ENCODE measurements at regions of chr1 and their contacts with region 1.

Region 1: DNA sequence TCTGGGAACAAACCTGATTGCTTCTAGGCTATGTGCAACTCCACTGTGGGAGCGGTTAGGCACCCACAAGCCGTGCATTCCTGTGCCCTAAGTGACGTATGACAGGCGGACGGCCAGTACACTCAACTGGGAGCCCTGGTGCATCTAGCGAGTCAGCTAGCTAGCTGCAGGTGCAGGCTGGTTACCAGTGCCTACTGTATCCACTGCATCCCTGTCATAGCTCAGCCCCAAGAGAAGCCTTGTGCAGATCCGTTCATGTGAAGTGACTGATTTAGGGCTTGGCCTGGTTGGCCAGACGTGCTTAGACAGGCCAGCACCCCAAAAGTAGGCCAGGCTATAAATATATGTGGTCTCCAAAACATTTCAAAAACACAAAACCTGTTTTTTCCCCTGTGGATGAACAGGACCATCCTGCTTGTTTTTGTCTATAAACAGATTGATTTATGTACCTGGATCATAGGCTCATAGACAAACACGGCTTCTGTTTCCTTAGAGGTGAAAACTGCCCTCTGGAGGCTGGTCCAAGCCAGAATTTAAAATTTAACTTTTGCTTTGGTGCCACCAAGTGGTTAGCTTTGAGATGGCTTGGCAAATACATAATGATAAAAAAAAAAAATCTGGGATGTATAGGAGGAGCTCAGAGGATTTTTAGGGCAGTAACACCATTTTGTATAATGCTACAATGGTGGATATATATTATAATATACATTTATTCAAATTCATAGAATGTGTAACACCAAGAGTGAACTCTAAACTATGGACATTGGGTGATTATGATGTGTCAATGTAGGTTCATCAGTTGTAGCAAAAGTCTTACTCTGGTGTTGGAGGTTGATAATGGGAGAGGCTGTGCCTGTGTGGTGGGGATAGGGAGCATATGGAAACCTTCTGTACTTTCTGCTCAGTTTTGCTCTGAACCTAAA is 68.5 kb downstream of the GIPC2 start:
- DNase-seq: peak; percentile 73
- H3K4me3 ChIP-seq: no peak overlapping the region
- H3K27ac ChIP-seq: peak overlapping the region; percentile 38
- H3K4me1 ChIP-seq: peaks cover 16% of the 10 kb centered on the region
- H3K27me3 ChIP-seq: no peaks in the 10 kb centered on the region
- CTCF ChIP-seq: peak; percentile 63 to 89

Region 2: DNA sequence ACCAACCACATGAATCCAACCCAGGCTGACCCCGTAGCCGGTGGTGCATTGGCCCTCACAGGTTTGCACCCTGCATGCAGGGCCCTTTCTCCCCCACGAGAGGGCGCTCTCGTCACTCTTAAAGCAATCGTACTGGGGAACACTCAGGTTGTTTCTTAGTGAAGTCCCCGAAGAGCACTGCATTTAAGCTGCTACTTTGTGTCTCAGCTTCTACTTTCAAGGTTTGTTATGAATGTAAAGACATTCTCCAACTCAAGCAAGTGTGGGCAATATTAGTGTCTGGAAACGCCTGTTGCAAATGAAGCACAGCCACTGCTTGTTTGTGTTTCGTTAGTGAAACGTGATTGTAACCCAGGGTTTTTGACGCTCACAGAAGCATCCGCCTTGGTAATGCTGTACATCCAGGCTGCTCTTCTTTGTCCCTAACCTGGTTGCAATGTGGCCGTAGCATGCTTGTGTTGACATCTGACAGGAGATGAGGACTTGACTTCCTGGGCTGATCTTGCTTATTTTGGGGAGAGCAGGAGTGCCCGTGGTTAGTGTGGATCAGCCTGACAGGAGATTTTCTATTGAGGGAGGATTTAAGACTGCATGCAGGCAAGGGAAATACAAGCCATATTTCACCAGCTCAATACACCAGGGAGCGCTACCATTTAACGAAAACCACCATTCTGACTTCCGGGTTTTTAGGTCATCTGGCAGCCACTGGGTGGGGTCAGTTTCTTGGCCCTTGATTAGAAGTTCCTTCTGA is 1959.9 kb before region 1 on chr1:
- CTCF ChIA-PET with region 1: no interaction called
- dilution Hi-C with region 1: no loop called
- in situ Hi-C with region 1: no loop called
- intact Hi-C with region 1: loop called (anchors 5 kb)
- DNase-seq: peak; percentile 55
- H3K4me3 ChIP-seq: peak overlapping the region in 2 of 3 experiments; percentile 33 to 41
- H3K27ac ChIP-seq: no peak overlapping the region
- H3K4me1 ChIP-seq: peaks cover 4% of the 10 kb centered on the region
- H3K27me3 ChIP-seq: no peaks in the 10 kb centered on the region
- CTCF ChIP-seq: peak; percentile 97 to 98

Region 3: GRCh38 chr1:77533660-77534305 is 580.5 kb before region 1 on chr1:
- CTCF ChIA-PET with region 1: no interaction called
- dilution Hi-C with region 1: no loop called
- in situ Hi-C with region 1: no loop called
- intact Hi-C with region 1: loop called (anchors 10 kb)
- DNase-seq: peak; percentile 35
- H3K4me3 ChIP-seq: no peak overlapping the region
- H3K27ac ChIP-seq: no peak overlapping the region
- H3K4me1 ChIP-seq: peaks cover 28% of the 10 kb centered on the region
- H3K27me3 ChIP-seq: no peaks in the 10 kb centered on the region
- CTCF ChIP-seq: peak; percentile 71 to 81

Region 4: DNA sequence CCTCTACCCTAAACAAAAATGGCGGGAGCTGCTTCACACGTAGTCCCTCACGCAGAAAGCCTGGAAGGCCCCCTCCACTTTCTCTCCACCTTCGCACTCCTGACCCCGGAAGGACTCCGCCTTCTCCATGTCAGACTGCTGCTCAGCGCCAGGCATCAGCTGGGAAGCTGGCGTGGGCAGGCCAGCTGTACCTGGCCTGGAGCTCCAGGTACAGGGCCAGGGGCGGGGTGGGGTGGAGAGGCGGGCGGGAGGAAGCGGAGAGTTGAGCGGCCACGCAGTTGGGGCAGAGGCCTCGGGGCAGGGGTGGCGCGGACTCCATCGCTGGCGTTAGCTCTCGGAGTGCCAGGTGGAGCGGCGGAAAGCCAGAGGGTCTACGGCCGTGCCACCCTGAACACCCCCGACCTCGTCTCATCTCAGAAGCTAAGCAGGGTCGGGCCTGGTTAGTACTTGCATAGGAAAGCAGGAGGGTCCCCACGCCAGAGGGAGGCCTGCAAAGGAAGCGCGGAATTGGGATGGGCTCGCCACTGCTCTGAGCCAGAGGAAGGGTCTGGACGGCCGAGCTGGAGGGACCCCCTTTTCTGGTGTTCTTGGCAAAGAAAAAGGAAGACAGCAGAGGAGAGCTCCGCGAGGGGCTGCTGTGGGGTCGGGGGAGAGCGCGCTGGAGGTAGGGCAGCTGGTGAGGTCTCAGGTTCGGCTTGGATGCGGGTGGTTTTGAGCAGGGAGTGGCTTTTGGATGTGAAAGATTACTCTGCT is 334.6 kb before region 1 on chr1 and contains the start of gene MIGA1:
- CTCF ChIA-PET with region 1: interaction called, 25 read pairs
- dilution Hi-C with region 1: no loop called
- in situ Hi-C with region 1: no loop called
- intact Hi-C with region 1: no loop called
- DNase-seq: peak; percentile 93
- H3K4me3 ChIP-seq: peak within 1 kb of the TSS; percentile 78 to 89 (median 83)
- H3K27ac ChIP-seq: peak within 1 kb of the TSS; percentile 35
- H3K4me1 ChIP-seq: no peaks in the 10 kb centered on the region
- H3K27me3 ChIP-seq: no peaks in the 10 kb centered on the region
- CTCF ChIP-seq: no peak
- total RNA-seq, gene MIGA1: 15.2 to 16.6 TPM

Region 5: DNA sequence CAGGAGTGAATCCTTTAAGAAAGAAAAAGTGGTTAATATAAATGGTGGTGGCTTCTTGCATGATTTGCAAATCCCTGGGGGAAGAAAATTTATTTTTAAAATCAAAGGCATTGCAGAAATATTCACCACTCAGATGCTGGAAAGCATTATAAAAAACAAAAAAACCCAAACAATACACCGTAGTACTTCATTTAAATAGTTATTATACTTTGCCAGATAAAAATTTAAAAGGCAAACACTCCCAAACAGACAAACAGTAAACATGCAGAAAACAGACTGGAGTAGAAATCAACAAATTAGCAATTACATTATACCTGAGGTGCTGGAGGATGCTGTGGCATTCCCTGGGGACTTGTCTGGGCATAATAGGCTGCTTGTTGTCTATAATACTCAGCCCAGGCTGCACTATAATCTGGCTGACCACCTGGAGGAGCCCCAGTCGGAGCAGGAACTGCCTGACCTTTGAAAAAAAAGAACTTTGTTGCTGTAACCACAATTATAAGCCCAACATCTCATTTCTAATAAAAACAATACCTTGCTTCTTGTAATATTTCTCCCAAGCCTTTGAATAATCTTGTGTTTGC is 165.4 kb before region 1 on chr1:
- CTCF ChIA-PET with region 1: interaction called, 9 read pairs
- dilution Hi-C with region 1: no loop called
- in situ Hi-C with region 1: no loop called
- intact Hi-C with region 1: loop called (anchors 1 kb)
- DNase-seq: peak; percentile 53
- H3K4me3 ChIP-seq: peak overlapping the region in 1 of 3 experiments; percentile 35
- H3K27ac ChIP-seq: peak overlapping the region; percentile 19
- H3K4me1 ChIP-seq: peaks cover 8% of the 10 kb centered on the region
- H3K27me3 ChIP-seq: no peaks in the 10 kb centered on the region
- CTCF ChIP-seq: peak; percentile 27 to 52

Region 6: GRCh38 chr1:78004719-78005447 is 109.4 kb before region 1 on chr1 and contains the start of gene DNAJB4:
- CTCF ChIA-PET with region 1: interaction called, 7 read pairs
- dilution Hi-C with region 1: no loop called
- in situ Hi-C with region 1: loop called in 1 of 2 experiments (anchors 10 kb)
- intact Hi-C with region 1: loop called (anchors 1 kb)
- DNase-seq: peak; percentile 96
- H3K4me3 ChIP-seq: peak within 1 kb of the TSS; percentile 57 to 89 (median 70)
- H3K27ac ChIP-seq: peak within 1 kb of the TSS; percentile 100
- H3K4me1 ChIP-seq: peaks cover 14% of the 10 kb centered on the region
- H3K27me3 ChIP-seq: no peaks in the 10 kb centered on the region
- CTCF ChIP-seq: no peak
- total RNA-seq, gene DNAJB4: 15.6 to 25.3 TPM

Region 7: GRCh38 chr1:78055565-78056132 is 58.6 kb before region 1 on chr1:
- CTCF ChIA-PET with region 1: no interaction called
- dilution Hi-C with region 1: no loop called
- in situ Hi-C with region 1: no loop called
- intact Hi-C with region 1: loop called (anchors 5 kb)
- DNase-seq: no peak
- H3K4me3 ChIP-seq: no peak overlapping the region
- H3K27ac ChIP-seq: no peak overlapping the region
- H3K4me1 ChIP-seq: no peaks in the 10 kb centered on the region
- H3K27me3 ChIP-seq: no peaks in the 10 kb centered on the region
- CTCF ChIP-seq: no peak